ENCODE measurements at regions of chr19 and their contacts with region 1.

Region 1: DNA sequence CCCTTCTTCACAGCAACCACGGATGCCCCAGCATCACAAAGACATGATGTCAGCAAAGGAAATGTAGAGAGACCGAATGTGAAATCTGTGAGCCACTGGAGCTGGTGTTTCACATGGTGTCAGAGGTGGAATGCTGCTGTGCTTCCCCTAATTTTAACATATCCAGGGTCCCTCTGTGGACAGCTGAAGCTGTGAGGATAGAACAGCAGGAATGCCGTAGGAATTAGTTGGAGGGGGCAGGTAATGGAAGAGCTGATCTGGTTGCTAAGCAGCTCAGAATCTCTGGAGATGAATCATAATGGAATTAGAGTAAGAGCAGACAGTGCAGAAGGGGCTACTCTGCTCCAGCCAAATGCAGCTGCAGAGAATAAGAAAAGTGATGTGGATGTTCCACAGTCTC is 68.9 kb upstream of the ZNF835 start:
- DNase-seq: no peak
- H3K4me3 ChIP-seq: no peak overlapping the region
- H3K27ac ChIP-seq: no peak overlapping the region
- H3K4me1 ChIP-seq: no peaks in the 10 kb centered on the region
- H3K27me3 ChIP-seq: no peaks in the 10 kb centered on the region
- CTCF ChIP-seq: no peak
- POLR2A ChIP-seq: no peak

Region 2: DNA sequence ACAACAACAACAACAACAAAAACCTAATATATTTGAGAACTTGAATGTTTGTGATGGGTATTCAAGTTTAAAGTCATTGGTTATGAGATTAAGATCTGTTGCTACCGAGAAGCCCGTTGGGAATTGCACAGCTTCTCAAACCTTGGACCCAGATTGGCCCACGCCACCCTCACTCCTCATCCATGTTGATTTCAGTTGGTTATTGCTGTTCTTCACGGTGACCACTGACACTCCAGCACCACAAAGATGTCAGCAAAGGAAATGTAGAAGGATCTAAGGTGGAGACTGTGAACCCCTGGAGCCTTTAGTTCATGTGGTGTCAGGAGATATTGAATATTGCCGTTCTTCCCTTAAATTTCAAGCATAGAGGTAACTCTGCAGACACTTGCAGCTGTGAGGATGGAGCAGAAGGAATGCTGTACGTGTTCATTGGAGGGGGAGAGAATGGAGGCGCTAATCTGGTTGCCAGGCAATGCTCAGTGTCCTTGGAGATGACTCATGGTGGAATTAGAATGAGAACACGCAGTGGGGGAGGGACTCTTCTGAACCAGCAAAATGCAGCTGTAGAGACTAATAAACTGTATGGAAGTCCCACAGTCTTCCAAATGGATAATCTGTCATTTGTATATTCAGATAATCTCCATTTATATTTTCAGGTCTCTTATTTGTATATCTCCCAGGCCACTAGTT is 48.1 kb before region 1 on chr19:
- intact Hi-C with region 1: no loop called
- DNase-seq: peak; percentile 71 to 89 (median 75)
- H3K4me3 ChIP-seq: no peak overlapping the region
- H3K27ac ChIP-seq: peak overlapping the region in 1 of 5 donors; percentile 22
- H3K4me1 ChIP-seq: peaks cover 0 to 4% of the 10 kb centered on the region in 2 donors
- H3K27me3 ChIP-seq: no peaks in the 10 kb centered on the region
- CTCF ChIP-seq: no peak
- POLR2A ChIP-seq: no peak

Region 3: GRCh38 chr19:57103573-57104277 is 363.2 kb after region 1 on chr19:
- intact Hi-C with region 1: loop called in 1 of 2 experiments (anchors 5 kb)
- DNase-seq: peak; percentile 54 to 90 (median 71)
- H3K4me3 ChIP-seq: peak overlapping the region in 1 of 4 donors; percentile 27
- H3K27ac ChIP-seq: no peak overlapping the region
- H3K4me1 ChIP-seq: no peaks in the 10 kb centered on the region
- H3K27me3 ChIP-seq: peaks cover 13% of the 10 kb centered on the region
- CTCF ChIP-seq: peak; percentile 79 to 99 (median 88)
- POLR2A ChIP-seq: no peak